ENCODE measurements at regions of chr6 and their contacts with region 1.

Region 1: GRCh38 chr6:144931172-144932035 is 646.3 kb downstream of the UTRN start:
- DNase-seq: peak in 2 of 4 experiments; percentile 11 to 46
- ATAC-seq: peak; percentile 74
- H3K4me3 ChIP-seq: no peak overlapping the region
- H3K27ac ChIP-seq: no peak overlapping the region
- H3K4me1 ChIP-seq: no peaks in the 10 kb centered on the region
- H3K27me3 ChIP-seq: no peaks in the 10 kb centered on the region
- CTCF ChIP-seq: peak; percentile 32 to 67 (median 61); a peak in 5 of 6 replicates
- EP300 ChIP-seq: no peak
- POLR2A ChIP-seq: no peak
- RAD21 ChIP-seq: peak; percentile 60 to 84

Region 2: GRCh38 chr6:143575440-143575839 is 1356.0 kb before region 1 on chr6:
- CTCF ChIA-PET with region 1: no interaction called
- POLR2A ChIA-PET with region 1: no interaction called
- in situ Hi-C with region 1: no loop called
- intact Hi-C with region 1: loop called (anchors 10 kb)
- DNase-seq: peak; percentile 79 to 85 (median 84)
- ATAC-seq: peak; percentile 95
- H3K4me3 ChIP-seq: no peak overlapping the region
- H3K27ac ChIP-seq: no peak overlapping the region
- H3K4me1 ChIP-seq: no peaks in the 10 kb centered on the region
- H3K27me3 ChIP-seq: peaks cover 0 to 3% of the 10 kb centered on the region in 2 experiments; a peak in 1 of 5 replicates
- CTCF ChIP-seq: peak; percentile 86 to 97 (median 94)
- EP300 ChIP-seq: no peak
- POLR2A ChIP-seq: no peak
- RAD21 ChIP-seq: peak; percentile 99

Region 3: DNA sequence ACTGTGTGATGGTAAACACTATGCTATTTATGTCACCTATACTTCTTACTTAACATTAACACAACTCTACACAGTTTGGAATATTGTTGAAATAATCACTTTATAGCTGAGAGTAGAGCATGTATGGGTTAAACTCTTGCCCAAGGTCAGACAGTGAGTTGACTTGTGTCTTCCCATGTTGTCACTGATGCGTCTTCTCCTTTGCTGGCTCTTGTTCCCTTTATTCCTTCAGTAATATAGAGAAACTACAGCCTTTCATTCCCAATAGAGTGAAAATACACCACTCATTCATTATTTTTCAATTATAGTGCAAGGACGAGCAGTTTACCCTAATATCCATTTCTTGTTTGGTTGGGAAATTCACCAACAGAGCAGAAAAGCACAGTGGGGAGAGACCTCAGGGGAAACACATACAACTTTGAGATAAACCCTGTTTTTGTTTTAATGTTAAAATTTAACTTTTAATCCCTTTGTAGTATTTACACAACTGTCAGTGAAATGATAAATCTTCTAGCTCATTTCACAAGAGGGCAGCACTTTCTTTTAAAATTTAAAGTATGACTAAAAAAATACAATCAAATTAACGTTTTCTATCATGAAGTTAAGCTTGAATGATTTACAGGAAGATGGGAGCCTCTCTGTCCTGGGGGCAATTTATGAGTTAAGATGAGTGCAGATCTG is 283.3 kb before region 1 on chr6:
- CTCF ChIA-PET with region 1: no interaction called
- POLR2A ChIA-PET with region 1: no interaction called
- in situ Hi-C with region 1: no loop called
- intact Hi-C with region 1: loop called (anchors 5 kb)
- DNase-seq: no peak
- ATAC-seq: no peak
- H3K4me3 ChIP-seq: no peak overlapping the region
- H3K27ac ChIP-seq: no peak overlapping the region
- H3K4me1 ChIP-seq: no peaks in the 10 kb centered on the region
- H3K27me3 ChIP-seq: no peaks in the 10 kb centered on the region
- CTCF ChIP-seq: peak in 1 of 3 experiments; percentile 9; a peak in 1 of 6 replicates
- EP300 ChIP-seq: no peak
- POLR2A ChIP-seq: no peak
- RAD21 ChIP-seq: no peak; a peak in 1 of 4 replicates

Region 4: GRCh38 chr6:145028144-145028818 is 96.9 kb after region 1 on chr6:
- CTCF ChIA-PET with region 1: no interaction called
- POLR2A ChIA-PET with region 1: no interaction called
- in situ Hi-C with region 1: no loop called
- intact Hi-C with region 1: loop called (anchors 5 kb)
- DNase-seq: peak in 2 of 4 experiments; percentile 21 to 59
- ATAC-seq: peak; percentile 82
- H3K4me3 ChIP-seq: no peak overlapping the region
- H3K27ac ChIP-seq: no peak overlapping the region
- H3K4me1 ChIP-seq: no peaks in the 10 kb centered on the region
- H3K27me3 ChIP-seq: no peaks in the 10 kb centered on the region
- CTCF ChIP-seq: peak in 2 of 3 experiments; percentile 37 to 56; a peak in 3 of 6 replicates
- EP300 ChIP-seq: no peak
- POLR2A ChIP-seq: no peak
- RAD21 ChIP-seq: peak; percentile 83 to 85

Region 5: DNA sequence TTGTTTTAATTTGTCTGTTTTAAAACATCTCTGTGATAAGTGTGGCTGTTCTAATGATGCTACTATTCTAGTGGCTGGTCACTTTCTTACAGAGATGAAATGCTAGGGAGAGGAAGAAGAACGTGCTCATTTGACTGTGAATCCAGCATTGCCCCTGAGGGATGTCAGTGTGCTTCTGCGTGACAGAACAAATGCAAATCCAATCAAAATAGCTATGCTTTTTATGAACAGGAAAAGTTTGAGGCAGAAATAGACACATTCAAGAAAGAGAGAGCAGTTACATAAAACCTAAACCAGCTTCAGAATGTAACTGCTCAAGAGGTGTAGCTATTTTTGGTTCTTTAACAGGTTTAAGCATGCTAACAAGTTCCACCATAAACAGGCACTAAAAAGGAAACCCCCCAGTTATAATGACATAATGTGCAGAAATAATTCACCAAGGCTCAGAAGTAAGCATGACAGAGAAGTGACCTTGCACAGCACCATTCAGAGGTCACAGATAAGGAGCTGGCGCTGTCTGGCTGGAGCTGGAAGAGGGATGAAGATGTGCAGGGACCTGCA is 418.6 kb after region 1 on chr6:
- CTCF ChIA-PET with region 1: no interaction called
- POLR2A ChIA-PET with region 1: no interaction called
- in situ Hi-C with region 1: no loop called
- intact Hi-C with region 1: no loop called
- DNase-seq: no peak
- ATAC-seq: no peak
- H3K4me3 ChIP-seq: no peak overlapping the region
- H3K27ac ChIP-seq: no peak overlapping the region
- H3K4me1 ChIP-seq: no peaks in the 10 kb centered on the region
- H3K27me3 ChIP-seq: no peaks in the 10 kb centered on the region
- CTCF ChIP-seq: no peak
- EP300 ChIP-seq: no peak
- POLR2A ChIP-seq: no peak
- RAD21 ChIP-seq: no peak

Measured in K562 (cell line).